Tibial artery (tissue), 4 donors: ENCODE measurements at regions of chr12 and their contacts with region 1.

Region 1: GRCh38 chr12:111812881-111813741 is 28.9 kb upstream of the MAPKAPK5 start:
- DNase-seq: peak; percentile 84 to 85
- H3K4me3 ChIP-seq: no peak overlapping the region
- H3K27ac ChIP-seq: no peak overlapping the region
- H3K4me1 ChIP-seq: no peaks in the 10 kb centered on the region
- H3K27me3 ChIP-seq: no peaks in the 10 kb centered on the region
- CTCF ChIP-seq: peak; percentile 79 to 88

Region 2: GRCh38 chr12:111753144-111753881 is 59.8 kb before region 1 on chr12:
- intact Hi-C with region 1: loop called (anchors 2 kb)
- DNase-seq: peak; percentile 42 to 75
- H3K4me3 ChIP-seq: no peak overlapping the region
- H3K27ac ChIP-seq: no peak overlapping the region
- H3K4me1 ChIP-seq: peaks cover 0 to 15% (median 0%) of the 10 kb centered on the region in 4 donors
- H3K27me3 ChIP-seq: no peaks in the 10 kb centered on the region
- CTCF ChIP-seq: peak; percentile 75 to 84